Activated CD4-positive, alpha-beta T cell treated with anti-CD3 and anti-CD28 coated beads, Interleukin-2, amount 10 ng/mL, durations not matched to agents 24 days and 14 days (primary cell): ENCODE measurements at regions of chr17 and their contacts with region 1.

Region 1: GRCh38 chr17:27601069-27601975 is 29.7 kb upstream of the LGALS9 start:
- DNase-seq: peak; percentile 95
- H3K4me3 Mint-ChIP-seq: no peak overlapping the region
- H3K27ac Mint-ChIP-seq: peak overlapping the region; percentile 41
- H3K4me1 Mint-ChIP-seq: peaks cover 18% of the 10 kb centered on the region
- H3K27me3 Mint-ChIP-seq: no peaks in the 10 kb centered on the region

Region 2: GRCh38 chr17:27353461-27354050 is 247.8 kb before region 1 on chr17:
- intact Hi-C with region 1: loop called (anchors 1 kb)
- DNase-seq: peak; percentile 96
- H3K4me3 Mint-ChIP-seq: peak overlapping the region; percentile 91
- H3K27ac Mint-ChIP-seq: peak overlapping the region; percentile 95
- H3K4me1 Mint-ChIP-seq: peaks cover 26% of the 10 kb centered on the region
- H3K27me3 Mint-ChIP-seq: no peaks in the 10 kb centered on the region

Region 3: DNA sequence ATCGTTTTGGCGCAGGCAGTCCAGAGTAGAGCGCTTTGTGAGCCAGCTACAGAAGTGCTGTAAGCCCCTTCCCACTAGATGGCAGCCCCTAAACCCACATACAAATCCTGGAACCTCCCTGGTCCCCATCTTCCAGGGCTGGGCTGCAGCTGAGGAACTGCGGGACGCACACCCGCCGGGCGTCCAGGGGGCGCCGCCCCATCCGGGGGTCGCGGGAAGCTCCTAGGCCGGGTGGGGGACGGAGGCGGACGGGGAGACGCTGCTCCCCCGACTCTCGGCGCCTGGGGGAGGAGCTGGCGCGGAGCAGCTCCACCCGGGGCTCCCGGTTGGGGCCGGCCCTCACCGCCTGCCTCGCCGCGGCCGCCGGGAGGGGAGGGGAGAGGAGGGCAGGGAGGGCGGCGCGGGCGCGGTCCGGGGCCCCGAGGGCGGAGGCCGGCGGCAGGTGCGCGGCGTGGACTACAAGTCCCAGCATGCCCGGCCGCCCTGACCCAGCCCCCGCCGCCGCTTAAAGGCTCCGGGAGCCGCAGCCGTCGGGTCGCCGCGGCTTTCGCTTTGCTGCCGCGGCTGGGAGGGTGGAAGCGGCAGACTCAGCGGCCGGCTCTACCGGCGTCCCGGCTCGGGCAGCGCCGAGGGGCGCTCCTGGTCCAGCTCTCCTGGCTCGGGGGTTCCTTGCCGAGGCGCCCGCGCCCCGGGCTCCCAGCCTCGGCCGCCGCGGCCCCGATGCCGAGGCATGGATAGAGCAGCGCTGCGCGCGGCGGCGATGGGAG is 145.2 kb before region 1 on chr17 and contains the start of gene KSR1:
- intact Hi-C with region 1: loop called (anchors 1 kb)
- DNase-seq: peak; percentile 95
- H3K4me3 Mint-ChIP-seq: peak within 1 kb of the TSS; percentile 98
- H3K27ac Mint-ChIP-seq: peak within 1 kb of the TSS; percentile 77
- H3K4me1 Mint-ChIP-seq: peaks cover 42% of the 10 kb centered on the region
- H3K27me3 Mint-ChIP-seq: no peaks in the 10 kb centered on the region
- total RNA-seq, gene KSR1: 104 TPM in 2 replicates

Region 4: DNA sequence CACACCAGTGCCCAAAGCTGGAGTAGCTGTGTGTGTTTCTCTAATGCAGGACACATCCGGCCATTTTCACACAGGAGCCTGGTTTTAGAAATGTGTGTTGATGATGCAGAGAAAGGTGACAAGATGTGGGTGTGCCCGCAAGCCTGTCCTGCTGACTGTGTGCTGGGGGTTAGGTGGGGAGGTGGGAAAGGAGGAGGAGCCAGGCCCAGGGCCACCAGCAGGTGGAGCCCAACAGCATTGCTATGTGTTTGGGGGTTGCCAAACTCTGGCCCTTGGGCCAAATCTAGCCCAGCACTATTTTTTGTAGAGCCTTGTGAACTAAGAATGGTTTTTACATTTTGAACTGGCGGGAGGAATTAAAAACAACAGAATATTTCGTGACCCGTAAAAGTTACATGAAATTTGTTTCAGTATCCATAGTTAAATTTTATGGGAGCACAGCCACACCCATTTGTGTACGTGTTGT is 32.0 kb before region 1 on chr17:
- intact Hi-C with region 1: loop called (anchors 2 kb)
- DNase-seq: peak; percentile 81
- H3K4me3 Mint-ChIP-seq: no peak overlapping the region
- H3K27ac Mint-ChIP-seq: peak overlapping the region; percentile 48
- H3K4me1 Mint-ChIP-seq: peaks cover 69% of the 10 kb centered on the region
- H3K27me3 Mint-ChIP-seq: no peaks in the 10 kb centered on the region

Region 5: GRCh38 chr17:27760069-27760885 is 159.0 kb after region 1 on chr17:
- intact Hi-C with region 1: loop called (anchors 5 kb)
- DNase-seq: peak; percentile 91
- H3K4me3 Mint-ChIP-seq: no peak overlapping the region
- H3K27ac Mint-ChIP-seq: no peak overlapping the region
- H3K4me1 Mint-ChIP-seq: peaks cover 1% of the 10 kb centered on the region
- H3K27me3 Mint-ChIP-seq: no peaks in the 10 kb centered on the region